Calu3 (cell line): ENCODE measurements at regions of chr17 and their contacts with region 1.

Region 1: DNA sequence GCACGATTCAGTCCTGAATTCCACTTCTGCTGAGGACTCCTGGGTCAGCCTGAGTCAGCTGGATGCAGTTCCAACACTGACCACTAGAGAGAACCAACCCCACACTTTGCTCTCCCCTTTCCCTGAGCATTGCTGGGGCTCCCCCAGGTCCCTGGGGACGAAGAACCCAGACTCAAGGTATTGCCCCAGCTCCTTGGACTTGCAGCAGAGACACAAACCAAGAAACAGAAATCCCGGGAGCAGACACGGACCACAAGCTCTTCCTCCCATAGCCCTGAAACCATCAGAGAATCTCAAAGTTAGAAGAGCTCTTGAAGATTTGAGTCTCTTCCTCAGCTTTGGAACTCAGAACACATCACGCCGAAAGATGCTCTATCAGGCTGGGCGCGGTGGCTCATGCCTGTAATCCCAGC is 678 bp upstream of the GH1 start:
- DNase-seq: peak; percentile 58
- H3K4me3 Mint-ChIP-seq: no peak overlapping the region
- H3K27ac Mint-ChIP-seq: no peak overlapping the region
- H3K4me1 Mint-ChIP-seq: no peaks in the 10 kb centered on the region
- H3K27me3 Mint-ChIP-seq: peaks cover 72% of the 10 kb centered on the region
- CTCF ChIP-seq: peak; percentile 90

Region 2: GRCh38 chr17:63785556-63785955 is 133.8 kb before region 1 on chr17:
- CTCF ChIA-PET with region 1: no interaction called
- intact Hi-C with region 1: no loop called
- DNase-seq: no peak
- H3K4me3 Mint-ChIP-seq: no peak overlapping the region
- H3K27ac Mint-ChIP-seq: peak overlapping the region; percentile 20
- H3K4me1 Mint-ChIP-seq: peaks cover 31% of the 10 kb centered on the region
- H3K27me3 Mint-ChIP-seq: no peaks in the 10 kb centered on the region
- CTCF ChIP-seq: no peak

Region 3: DNA sequence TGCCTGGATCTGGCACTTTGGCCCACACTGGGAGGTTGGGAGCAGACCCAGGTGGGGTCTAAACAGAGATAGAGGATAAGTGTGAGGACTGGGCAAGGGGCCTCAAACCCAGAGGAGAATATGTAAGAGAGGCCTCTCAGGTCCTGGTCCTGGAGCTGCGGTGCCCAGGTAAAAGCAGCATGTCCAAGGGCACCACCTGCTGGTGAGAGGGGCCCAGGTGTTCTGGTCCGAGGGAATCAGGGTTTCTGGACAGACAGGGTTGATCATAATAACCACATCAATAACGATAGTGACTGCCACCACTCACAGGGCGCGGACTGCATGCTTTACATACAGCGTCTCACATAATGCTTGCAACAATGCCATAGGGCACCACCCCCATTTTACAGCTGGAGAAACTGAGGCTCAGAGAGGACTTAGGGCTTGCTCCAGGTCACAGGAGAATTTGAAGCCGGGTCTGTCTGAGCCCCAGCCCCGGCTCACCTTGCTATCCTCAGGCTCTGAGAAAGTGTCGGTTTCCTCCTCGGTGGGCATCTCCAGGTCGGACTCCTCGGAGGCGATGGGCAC is 31.7 kb after region 1 on chr17:
- CTCF ChIA-PET with region 1: interaction called, 11 read pairs
- intact Hi-C with region 1: loop called (anchors 2 kb)
- DNase-seq: peak; percentile 77
- H3K4me3 Mint-ChIP-seq: no peak overlapping the region
- H3K27ac Mint-ChIP-seq: no peak overlapping the region
- H3K4me1 Mint-ChIP-seq: no peaks in the 10 kb centered on the region
- H3K27me3 Mint-ChIP-seq: peaks cover 33% of the 10 kb centered on the region
- CTCF ChIP-seq: peak; percentile 47

Region 4: GRCh38 chr17:64025732-64026294 is 106.5 kb after region 1 on chr17:
- CTCF ChIA-PET with region 1: interaction called, 12 read pairs
- intact Hi-C with region 1: loop called (anchors 2 kb)
- DNase-seq: peak; percentile 85
- H3K4me3 Mint-ChIP-seq: peak overlapping the region; percentile 74
- H3K27ac Mint-ChIP-seq: peak overlapping the region; percentile 19
- H3K4me1 Mint-ChIP-seq: peaks cover 8% of the 10 kb centered on the region
- H3K27me3 Mint-ChIP-seq: no peaks in the 10 kb centered on the region
- CTCF ChIP-seq: peak; percentile 92